Activated CD8-positive, alpha-beta T cell treated with anti-CD3 and anti-CD28 coated beads, Interleukin-2, amount 10 ng/mL, durations not matched to agents 7 days and 5 days (primary cell): ENCODE measurements at regions of chr12 and their contacts with region 1.

Region 1: GRCh38 chr12:94101738-94102660 is 46.4 kb upstream of the PLXNC1 start:
- DNase-seq: peak; percentile 93
- ATAC-seq: peak; percentile 85
- H3K4me3 Mint-ChIP-seq: peak overlapping the region; percentile 79
- H3K27ac Mint-ChIP-seq: peak overlapping the region; percentile 84
- H3K4me1 Mint-ChIP-seq: peaks cover 39% of the 10 kb centered on the region
- H3K27me3 Mint-ChIP-seq: peaks cover 9% of the 10 kb centered on the region

Region 2: GRCh38 chr12:93441617-93442410 is 660.2 kb before region 1 on chr12 and contains the start of gene UBE2N:
- CTCF ChIA-PET with region 1: interaction called, 24 read pairs
- POLR2A ChIA-PET with region 1: interaction called, 7 read pairs
- DNase-seq: peak; percentile 96
- ATAC-seq: peak; percentile 86
- H3K4me3 Mint-ChIP-seq: peak within 1 kb of the TSS; percentile 91
- H3K27ac Mint-ChIP-seq: peak within 1 kb of the TSS; percentile 99
- H3K4me1 Mint-ChIP-seq: peaks cover 48% of the 10 kb centered on the region
- H3K27me3 Mint-ChIP-seq: no peaks in the 10 kb centered on the region
- total RNA-seq, gene UBE2N: 183 to 194 TPM

Region 3: DNA sequence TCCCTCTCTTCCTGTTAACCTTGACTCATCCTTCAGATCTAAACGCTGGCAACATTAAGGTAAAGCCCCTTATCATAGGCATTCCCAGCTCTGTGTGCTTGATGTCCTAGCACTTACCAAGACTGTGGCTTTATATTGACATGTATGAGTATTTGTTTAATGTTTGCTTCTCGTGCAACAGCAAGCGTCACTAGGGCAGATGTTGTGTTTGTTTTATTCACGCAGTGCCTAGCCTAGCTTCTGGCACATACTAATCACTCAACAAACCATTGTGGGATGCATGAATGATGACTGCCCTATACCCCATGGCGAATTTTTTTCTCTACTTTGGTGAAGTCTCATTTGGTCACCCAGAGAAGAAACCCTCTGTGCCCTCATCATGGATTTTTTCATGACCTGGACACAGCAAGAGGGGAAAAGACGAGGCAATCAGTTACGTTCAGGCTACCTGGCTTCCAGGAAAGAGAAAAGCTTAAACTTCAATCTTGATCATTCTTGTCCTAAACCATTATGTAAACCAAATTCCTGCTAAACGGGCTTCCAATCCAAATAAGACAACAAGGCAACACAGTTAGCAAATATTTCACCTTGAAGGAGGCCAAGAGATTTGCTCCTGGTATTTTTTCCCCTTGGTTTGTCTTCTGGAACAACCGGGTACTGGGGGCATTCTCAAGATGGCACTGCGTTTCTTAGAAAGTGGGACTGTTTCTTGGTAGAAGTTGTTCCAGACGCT is 577.4 kb before region 1 on chr12:
- CTCF ChIA-PET with region 1: interaction called, 17 read pairs
- POLR2A ChIA-PET with region 1: no interaction called
- DNase-seq: no peak
- ATAC-seq: no peak
- H3K4me3 Mint-ChIP-seq: no peak overlapping the region
- H3K27ac Mint-ChIP-seq: no peak overlapping the region
- H3K4me1 Mint-ChIP-seq: peaks cover 5% of the 10 kb centered on the region
- H3K27me3 Mint-ChIP-seq: peaks cover 15% of the 10 kb centered on the region

Region 4: GRCh38 chr12:93742110-93742934 is 359.7 kb before region 1 on chr12:
- CTCF ChIA-PET with region 1: interaction called, 35 read pairs
- POLR2A ChIA-PET with region 1: no interaction called
- DNase-seq: peak; percentile 74
- ATAC-seq: peak; percentile 98
- H3K4me3 Mint-ChIP-seq: peak overlapping the region; percentile 81
- H3K27ac Mint-ChIP-seq: peak overlapping the region; percentile 92
- H3K4me1 Mint-ChIP-seq: peaks cover 34% of the 10 kb centered on the region
- H3K27me3 Mint-ChIP-seq: peaks cover 3% of the 10 kb centered on the region

Region 5: DNA sequence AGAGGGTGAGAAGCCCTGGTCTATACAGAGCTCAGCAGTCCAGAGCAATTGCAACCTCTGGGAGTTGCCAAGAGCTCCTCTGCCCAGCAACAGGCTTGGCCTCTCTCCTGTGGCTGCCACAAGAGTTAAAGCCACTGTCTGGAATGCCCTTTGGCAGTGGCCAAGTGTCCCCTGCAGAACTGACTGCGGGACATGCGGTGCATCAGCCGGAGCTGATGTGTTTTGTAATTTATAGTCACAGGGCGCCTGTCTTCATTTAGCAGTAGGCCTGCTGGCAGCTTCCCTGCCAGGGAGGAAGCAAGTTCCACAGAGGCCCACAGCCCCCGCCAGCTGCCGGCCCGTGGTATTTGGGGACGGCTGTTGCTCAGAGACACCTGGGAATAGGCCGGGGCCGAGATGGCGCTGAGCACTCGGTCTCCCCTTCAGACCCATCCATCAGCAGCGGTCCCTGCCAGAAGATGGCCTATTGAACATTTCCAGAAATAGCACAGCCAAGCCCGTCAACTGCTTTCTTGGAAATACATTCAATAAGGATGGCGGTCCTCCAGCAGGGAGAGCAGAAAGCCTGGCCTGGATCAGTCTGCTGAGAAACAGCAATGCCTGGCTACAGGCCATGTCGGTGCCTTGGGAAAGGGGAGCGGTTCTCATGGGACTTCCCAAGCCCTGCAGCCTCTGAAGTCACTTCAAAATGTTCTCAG is 207.5 kb before region 1 on chr12:
- CTCF ChIA-PET with region 1: interaction called, 17 read pairs
- POLR2A ChIA-PET with region 1: no interaction called
- DNase-seq: no peak
- ATAC-seq: no peak
- H3K4me3 Mint-ChIP-seq: no peak overlapping the region
- H3K27ac Mint-ChIP-seq: no peak overlapping the region
- H3K4me1 Mint-ChIP-seq: peaks cover 25% of the 10 kb centered on the region
- H3K27me3 Mint-ChIP-seq: no peaks in the 10 kb centered on the region

Region 6: GRCh38 chr12:93916402-93916801 is 185.6 kb before region 1 on chr12:
- CTCF ChIA-PET with region 1: no interaction called
- POLR2A ChIA-PET with region 1: no interaction called
- DNase-seq: no peak
- ATAC-seq: no peak
- H3K4me3 Mint-ChIP-seq: no peak overlapping the region
- H3K27ac Mint-ChIP-seq: no peak overlapping the region
- H3K4me1 Mint-ChIP-seq: no peaks in the 10 kb centered on the region
- H3K27me3 Mint-ChIP-seq: peaks cover 5% of the 10 kb centered on the region

Region 7: GRCh38 chr12:94074980-94075928 is 26.7 kb before region 1 on chr12:
- CTCF ChIA-PET with region 1: interaction called, 40 read pairs
- POLR2A ChIA-PET with region 1: interaction called, 5 read pairs
- DNase-seq: no peak
- ATAC-seq: no peak
- H3K4me3 Mint-ChIP-seq: no peak overlapping the region
- H3K27ac Mint-ChIP-seq: no peak overlapping the region
- H3K4me1 Mint-ChIP-seq: peaks cover 16% of the 10 kb centered on the region
- H3K27me3 Mint-ChIP-seq: peaks cover 11% of the 10 kb centered on the region

Region 8: DNA sequence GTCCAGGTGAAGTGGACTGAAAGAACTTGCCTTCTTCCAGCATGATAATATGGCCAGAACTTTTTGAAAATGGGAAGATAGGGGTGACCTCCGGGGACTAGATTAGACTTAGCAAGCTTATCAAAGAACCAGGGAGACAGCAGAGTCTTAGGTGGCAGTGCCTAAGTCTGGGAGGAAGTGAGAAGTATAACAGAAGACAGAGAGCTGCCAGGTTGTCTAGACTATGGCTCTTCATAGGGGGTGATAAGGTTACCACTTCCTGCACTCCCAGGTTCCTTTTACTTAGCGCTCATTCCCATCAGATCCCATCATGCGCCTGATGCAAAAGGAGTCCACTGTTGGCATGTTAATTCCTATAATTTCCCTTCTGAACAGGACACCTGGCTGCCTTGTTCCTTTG is 116.2 kb after region 1 on chr12:
- CTCF ChIA-PET with region 1: no interaction called
- POLR2A ChIA-PET with region 1: no interaction called
- DNase-seq: no peak
- ATAC-seq: no peak
- H3K4me3 Mint-ChIP-seq: no peak overlapping the region
- H3K27ac Mint-ChIP-seq: no peak overlapping the region
- H3K4me1 Mint-ChIP-seq: peaks cover 2% of the 10 kb centered on the region
- H3K27me3 Mint-ChIP-seq: no peaks in the 10 kb centered on the region

Region 9: DNA sequence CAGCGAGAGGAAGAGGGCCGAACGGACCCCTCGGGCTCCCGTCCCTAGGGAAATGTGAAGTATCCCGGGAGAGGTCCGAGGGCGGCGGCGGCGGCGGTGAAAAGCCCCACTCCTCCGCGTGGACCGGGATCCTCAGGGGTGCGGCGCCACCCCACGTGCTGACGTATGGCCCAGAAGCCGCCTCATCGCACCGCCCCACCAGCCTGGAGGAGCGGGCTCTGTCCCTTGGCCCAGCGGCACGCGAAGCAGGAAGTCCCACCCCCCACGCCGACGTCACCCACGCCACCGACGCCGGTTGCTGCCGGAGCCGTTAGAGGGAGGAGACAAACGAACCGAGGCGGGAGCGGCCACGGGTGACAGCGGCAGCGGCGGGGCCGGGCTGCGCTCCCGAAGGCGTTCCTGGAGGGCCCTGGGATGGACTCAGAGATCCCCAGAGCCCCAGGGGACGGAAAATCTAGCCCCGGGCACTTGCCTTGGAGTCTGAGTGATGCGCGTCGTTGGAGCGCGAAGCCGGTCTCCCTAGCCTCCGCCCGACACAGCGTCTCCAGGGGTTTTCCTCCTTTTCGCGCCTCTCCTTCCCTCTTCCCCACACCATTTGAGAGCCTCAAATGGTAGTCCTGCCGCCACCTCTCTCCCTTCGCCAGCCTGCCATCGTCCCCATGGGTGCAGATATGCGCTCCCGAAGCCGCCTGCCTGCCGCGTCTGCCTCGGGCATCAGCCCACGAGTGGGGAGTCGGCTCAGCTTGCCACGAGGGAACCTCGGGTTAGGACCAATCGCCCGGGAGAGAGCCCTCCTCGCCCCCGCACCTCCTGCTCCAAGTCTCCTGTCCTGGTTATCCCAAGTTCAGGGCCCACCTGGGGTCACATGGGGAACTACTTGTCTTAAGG is 358.0 kb after region 1 on chr12 and contains the start of gene CEP83:
- CTCF ChIA-PET with region 1: interaction called, 10 read pairs
- POLR2A ChIA-PET with region 1: no interaction called
- DNase-seq: peak; percentile 98
- ATAC-seq: peak; percentile 97
- H3K4me3 Mint-ChIP-seq: peak within 1 kb of the TSS; percentile 86
- H3K27ac Mint-ChIP-seq: peak within 1 kb of the TSS; percentile 88
- H3K4me1 Mint-ChIP-seq: peaks cover 29% of the 10 kb centered on the region
- H3K27me3 Mint-ChIP-seq: peaks cover 11% of the 10 kb centered on the region
- total RNA-seq, gene CEP83: 23.4 to 23.9 TPM